GM10248 (cell line): ENCODE measurements at regions of chr14 and their contacts with region 1.

Region 1: DNA sequence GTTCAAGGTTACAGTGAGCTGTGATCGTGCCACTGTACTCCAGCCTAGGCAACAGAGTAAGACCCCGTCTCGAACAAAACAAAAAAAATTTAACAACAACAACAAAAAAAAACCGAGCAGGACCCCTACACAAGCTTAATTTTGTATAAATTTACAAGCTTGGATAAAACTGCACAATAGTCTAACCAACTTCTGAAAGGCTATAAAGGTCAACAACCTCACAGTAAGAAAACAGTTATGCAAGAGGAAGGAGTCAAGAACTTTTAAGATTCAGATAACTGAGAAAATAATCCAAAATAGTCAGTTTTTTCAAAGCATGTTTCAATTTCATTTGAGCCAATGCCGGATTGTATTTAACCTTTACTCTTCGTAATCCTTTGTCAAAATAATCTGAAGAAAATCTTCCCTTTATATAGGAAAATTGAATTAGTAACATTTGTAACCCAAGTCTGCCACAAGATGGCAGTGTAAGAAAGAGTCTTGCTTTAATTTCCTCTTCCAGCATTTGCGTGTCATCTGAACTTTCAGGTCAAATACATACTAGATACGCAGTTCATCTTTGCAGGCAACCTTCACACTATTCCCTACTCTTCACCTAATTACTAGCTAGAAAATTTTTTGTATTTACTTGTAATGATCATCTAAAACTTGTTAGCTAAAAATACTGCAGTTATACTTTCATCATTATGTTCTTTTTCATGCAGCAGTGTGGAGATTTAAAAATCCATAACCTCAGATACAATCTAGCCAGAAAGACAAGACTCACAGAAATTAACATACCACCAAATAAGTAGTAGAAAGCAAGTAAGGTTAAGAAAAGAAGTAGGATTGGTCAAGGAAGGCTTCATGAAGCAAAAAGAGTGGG is 5.8 kb downstream of the CCNB1IP1 start:
- DNase-seq: peak; percentile 60
- CTCF ChIP-seq: peak; percentile 58

Region 2: DNA sequence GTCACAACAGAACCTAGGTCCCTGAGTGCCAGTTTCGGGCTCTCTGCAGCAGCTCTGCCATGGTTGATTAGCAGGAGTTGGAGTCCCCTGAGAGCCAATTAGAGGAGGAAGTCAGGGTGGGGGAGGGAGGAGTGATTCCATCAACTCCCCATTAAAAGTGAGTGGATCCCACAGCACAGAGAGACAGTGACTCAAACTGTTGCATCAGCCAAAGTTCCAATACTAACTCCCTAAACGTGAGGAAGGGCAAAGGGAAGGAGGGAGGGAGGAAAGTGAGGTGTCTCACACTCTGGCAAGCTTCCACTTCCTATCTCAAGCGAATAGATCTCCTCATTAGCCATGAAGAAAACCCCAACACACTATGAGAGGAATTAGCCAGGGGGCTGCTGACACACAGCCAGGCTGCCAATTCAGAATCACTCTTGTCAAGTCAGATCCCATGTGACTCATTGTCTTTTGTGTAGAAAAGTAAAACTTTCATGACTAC is 64.6 kb before region 1 on chr14:
- CTCF ChIA-PET with region 1: no interaction called
- POLR2A ChIA-PET with region 1: no interaction called
- DNase-seq: no peak
- CTCF ChIP-seq: no peak

Region 3: DNA sequence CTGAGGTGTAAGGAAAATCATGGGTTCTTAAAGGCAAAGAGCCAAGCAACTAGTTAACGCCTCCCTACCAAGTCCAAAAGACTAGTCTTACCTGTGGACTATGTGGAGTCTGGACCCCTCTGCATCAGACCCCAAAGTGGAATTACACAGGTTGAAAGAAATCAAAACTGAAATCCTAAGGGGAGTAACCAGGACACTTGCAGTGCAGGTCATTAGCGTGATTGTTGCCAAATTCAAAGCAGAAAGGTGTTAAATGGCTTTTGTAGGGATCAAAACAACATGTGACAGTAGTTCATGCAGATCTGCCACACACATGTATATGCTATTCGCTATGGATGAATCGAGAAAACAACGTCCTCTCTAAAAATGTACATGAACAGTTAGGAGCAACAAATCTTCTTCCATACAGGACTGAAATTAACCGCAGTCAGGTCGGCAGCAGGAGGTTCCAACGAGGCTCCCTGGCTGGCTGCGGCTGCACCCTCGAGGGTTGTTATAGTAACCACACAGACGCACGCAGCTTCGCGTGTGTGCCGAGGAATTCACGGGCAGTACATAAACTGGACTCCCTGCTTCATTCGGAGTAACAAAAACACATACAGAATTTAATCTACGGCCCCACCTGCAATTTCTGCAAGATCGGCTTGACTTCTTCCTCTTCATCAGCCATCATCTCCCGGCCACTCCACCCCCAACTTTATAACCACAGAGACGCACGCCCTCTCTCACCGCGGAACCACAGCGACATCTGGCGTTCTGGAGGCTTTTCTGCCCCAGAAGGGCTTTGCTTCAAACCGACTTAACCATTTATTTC is 21.8 kb before region 1 on chr14 and contains the start of gene TTC5:
- CTCF ChIA-PET with region 1: interaction called, 10 read pairs
- POLR2A ChIA-PET with region 1: no interaction called
- DNase-seq: peak; percentile 85
- CTCF ChIP-seq: peak; percentile 94

Region 4: GRCh38 chr14:20350860-20351259 is 23.6 kb after region 1 on chr14:
- CTCF ChIA-PET with region 1: interaction called, 25 read pairs
- POLR2A ChIA-PET with region 1: no interaction called
- DNase-seq: no peak
- CTCF ChIP-seq: peak; percentile 8

Region 5: DNA sequence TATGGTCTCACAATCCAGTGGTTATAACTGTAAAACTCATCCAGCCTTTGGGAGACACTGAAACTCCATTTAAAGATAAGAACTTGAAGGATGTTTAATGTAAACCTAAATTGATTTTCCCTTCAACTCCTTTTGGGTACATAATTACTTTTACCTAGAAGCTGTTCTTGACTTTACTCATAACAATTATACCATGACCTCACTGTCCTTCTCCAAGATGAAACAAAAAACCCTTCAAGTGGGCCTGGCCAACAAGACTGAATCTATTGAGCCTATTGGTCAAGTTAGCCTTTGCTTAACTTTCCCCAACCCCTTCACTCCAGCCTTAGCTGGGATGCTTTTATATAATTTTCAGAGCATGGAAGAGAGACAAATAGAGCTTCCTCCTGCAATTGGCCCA is 38.7 kb after region 1 on chr14:
- CTCF ChIA-PET with region 1: interaction called, 10 read pairs
- POLR2A ChIA-PET with region 1: interaction called, 3 read pairs
- DNase-seq: no peak
- CTCF ChIP-seq: no peak

Region 6: GRCh38 chr14:20682435-20683124 is 355.3 kb after region 1 on chr14:
- CTCF ChIA-PET with region 1: interaction called, 14 read pairs
- POLR2A ChIA-PET with region 1: no interaction called
- DNase-seq: peak; percentile 84
- CTCF ChIP-seq: no peak

Region 7: DNA sequence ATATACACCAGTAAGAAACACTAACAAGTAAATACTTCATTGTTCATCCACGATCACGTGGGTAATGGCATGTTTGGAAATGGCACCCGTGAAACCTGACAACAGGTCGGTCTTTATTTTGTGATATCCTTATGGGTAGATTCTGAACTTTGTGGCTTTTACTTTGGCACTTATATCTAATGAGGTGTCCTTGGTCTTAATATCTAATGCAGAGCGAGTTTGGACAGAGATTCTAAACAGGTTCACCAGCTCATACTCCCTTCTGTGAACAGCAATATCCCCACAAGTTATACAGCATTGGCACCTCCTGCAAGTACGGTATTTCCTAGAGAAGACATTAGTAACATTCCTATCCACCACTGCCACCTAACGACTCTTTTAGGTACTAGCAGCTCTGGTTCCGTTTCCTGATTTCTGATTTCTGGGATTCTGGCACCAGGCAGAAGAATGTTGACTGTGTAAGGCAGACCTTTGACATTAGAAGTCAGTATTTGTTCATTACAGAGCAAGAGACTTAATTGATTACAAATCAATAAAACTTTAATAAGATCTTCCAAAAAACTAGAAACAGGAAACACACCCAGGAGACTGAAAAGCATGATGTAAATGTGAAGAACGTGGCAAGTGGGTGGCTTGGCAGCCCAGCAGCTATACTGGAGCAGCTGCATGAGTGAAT is 363.7 kb after region 1 on chr14:
- CTCF ChIA-PET with region 1: interaction called, 14 read pairs
- POLR2A ChIA-PET with region 1: no interaction called
- DNase-seq: peak; percentile 69
- CTCF ChIP-seq: peak; percentile 76